Activated CD8-positive, alpha-beta T cell treated with anti-CD3 and anti-CD28 coated beads for 36 hours (primary cell): ENCODE measurements at regions of chr16 and their contacts with region 1.

Region 1: DNA sequence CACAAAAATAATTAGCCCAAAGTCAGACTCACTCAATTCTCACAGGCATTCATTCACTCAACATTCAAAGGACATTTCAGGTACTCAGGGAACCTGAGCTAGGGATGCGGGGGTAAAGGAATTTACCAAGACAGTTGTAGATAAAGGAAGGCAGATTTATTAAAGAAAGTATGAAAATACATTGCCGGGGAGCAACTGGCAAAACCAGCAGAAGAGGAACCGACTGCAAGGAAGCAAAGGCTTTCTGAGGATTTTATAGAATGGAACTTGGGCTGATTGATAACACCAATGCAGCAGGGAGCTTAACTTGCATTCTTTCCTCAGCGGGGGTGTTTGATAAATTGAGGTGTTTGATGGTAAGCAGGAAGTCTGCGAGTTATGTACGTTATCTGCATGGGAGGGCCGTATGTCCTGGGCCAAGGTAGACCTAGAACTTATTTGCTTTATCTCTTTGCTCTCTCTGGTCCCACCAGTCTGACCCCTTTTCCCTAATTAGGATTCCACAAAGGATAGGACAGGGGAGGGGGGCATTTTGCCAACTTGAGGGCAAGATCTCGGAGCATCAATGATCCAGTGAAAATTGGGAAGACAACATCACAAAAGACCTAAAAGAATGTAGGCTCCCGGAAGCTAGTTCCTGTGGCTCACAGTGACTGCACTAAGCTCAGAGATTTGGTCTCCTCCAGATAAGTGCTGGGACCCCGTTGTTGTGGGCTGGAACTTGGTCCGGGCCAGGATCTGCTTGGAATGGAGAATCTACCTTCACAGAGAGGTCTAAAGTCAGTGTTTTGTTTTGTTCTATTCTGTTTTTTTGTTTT is 5.8 kb upstream of the MT3 start:
- DNase-seq: no peak
- ATAC-seq: no peak
- H3K4me3 Mint-ChIP-seq: no peak overlapping the region
- H3K27ac Mint-ChIP-seq: no peak overlapping the region
- H3K4me1 Mint-ChIP-seq: no peaks in the 10 kb centered on the region
- H3K27me3 Mint-ChIP-seq: peaks cover 3% of the 10 kb centered on the region
- CTCF ChIP-seq: no peak

Region 2: GRCh38 chr16:56532714-56533113 is 50.8 kb before region 1 on chr16:
- CTCF ChIA-PET with region 1: no interaction called
- POLR2A ChIA-PET with region 1: no interaction called
- intact Hi-C with region 1: no loop called
- DNase-seq: no peak
- ATAC-seq: no peak
- H3K4me3 Mint-ChIP-seq: no peak overlapping the region
- H3K27ac Mint-ChIP-seq: no peak overlapping the region
- H3K4me1 Mint-ChIP-seq: no peaks in the 10 kb centered on the region
- H3K27me3 Mint-ChIP-seq: peaks cover 7% of the 10 kb centered on the region
- CTCF ChIP-seq: no peak

Region 3: GRCh38 chr16:56600398-56600999 is 16.9 kb after region 1 on chr16:
- CTCF ChIA-PET with region 1: interaction called, 24 read pairs
- POLR2A ChIA-PET with region 1: interaction called, 3 read pairs
- intact Hi-C with region 1: no loop called
- DNase-seq: peak; percentile 67
- ATAC-seq: peak; percentile 81
- H3K4me3 Mint-ChIP-seq: no peak overlapping the region
- H3K27ac Mint-ChIP-seq: no peak overlapping the region
- H3K4me1 Mint-ChIP-seq: peaks cover 3% of the 10 kb centered on the region
- H3K27me3 Mint-ChIP-seq: peaks cover 6% of the 10 kb centered on the region
- CTCF ChIP-seq: peak; percentile 69